ENCODE measurements at regions of chr13 and their contacts with region 1.

Region 1: GRCh38 chr13:96817336-96817941 is 176.8 kb downstream of the OXGR1 start:
- DNase-seq: no peak
- CTCF ChIP-seq: peak; percentile 36

Region 2: GRCh38 chr13:96835546-96835945 is 18.1 kb after region 1 on chr13:
- CTCF ChIA-PET with region 1: interaction called, 25 read pairs
- POLR2A ChIA-PET with region 1: no interaction called
- DNase-seq: no peak
- CTCF ChIP-seq: no peak